Dorsolateral prefrontal cortex (tissue), 120 donors: ENCODE measurements at regions of chr16 and their contacts with region 1.

Region 1: DNA sequence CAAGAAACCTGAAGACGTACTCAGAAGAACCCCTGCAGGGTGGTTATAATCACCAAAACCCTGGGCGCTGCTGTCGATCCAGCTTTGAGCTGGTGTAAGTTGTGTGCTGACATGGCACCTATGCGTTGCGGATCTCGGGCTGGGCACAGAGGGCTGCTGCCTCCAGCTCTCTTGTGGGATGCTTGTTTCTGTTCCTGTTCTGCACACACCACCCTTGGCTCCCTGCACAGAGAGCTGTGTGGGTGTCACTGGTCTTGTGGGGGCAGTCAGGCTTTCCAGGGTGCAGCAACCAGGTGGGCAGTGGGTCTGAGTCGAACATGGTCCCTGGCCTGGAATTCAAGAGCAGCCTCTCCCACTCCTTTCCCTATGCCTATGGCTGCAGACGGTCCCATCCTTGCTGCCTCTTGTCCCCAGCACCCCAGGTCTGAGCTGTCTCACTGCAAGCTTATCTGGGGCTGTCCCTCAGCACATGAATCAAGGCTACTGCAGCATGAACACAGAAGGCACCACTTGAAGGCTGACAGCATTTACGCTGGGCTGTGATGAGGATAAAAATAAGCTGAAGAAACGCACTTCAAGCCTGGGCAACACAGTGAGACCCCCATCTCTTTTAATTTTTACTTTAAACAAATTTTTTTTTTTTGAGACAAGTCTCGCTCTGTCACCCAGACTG is 20.1 kb downstream of the ZNF276 start:
- DNase-seq: no peak
- H3K4me3 ChIP-seq: no peak overlapping the region
- H3K27ac ChIP-seq: peak overlapping the region in 34 of 59 donors; percentile 4 to 87 (median 54)
- H3K27me3 ChIP-seq: no peaks in the 10 kb centered on the region
- CTCF ChIP-seq: no peak

Region 2: GRCh38 chr16:89670496-89671431 is 70.7 kb before region 1 on chr16:
- intact Hi-C with region 1: no loop called
- DNase-seq: no peak
- H3K4me3 ChIP-seq: no peak overlapping the region
- H3K27ac ChIP-seq: no peak overlapping the region
- H3K27me3 ChIP-seq: no peaks in the 10 kb centered on the region
- CTCF ChIP-seq: no peak

Region 3: GRCh38 chr16:89708441-89708931 is 33.0 kb before region 1 on chr16:
- intact Hi-C with region 1: loop called in 1 of 2 experiments (anchors 5 kb)
- DNase-seq: no peak
- H3K4me3 ChIP-seq: no peak overlapping the region
- H3K27ac ChIP-seq: no peak overlapping the region
- H3K27me3 ChIP-seq: no peaks in the 10 kb centered on the region
- CTCF ChIP-seq: no peak

Region 4: GRCh38 chr16:89723279-89724250 is 17.9 kb before region 1 on chr16:
- intact Hi-C with region 1: loop called in 1 of 2 experiments (anchors 2 kb)
- DNase-seq: peak; percentile 46 to 98 (median 96)
- H3K4me3 ChIP-seq: peak overlapping the region; percentile 7 to 97 (median 85)
- H3K27ac ChIP-seq: peak overlapping the region; percentile 83 to 99 (median 97)
- H3K27me3 ChIP-seq: no peaks in the 10 kb centered on the region
- CTCF ChIP-seq: peak in 9 of 56 donors; percentile 7 to 34 (median 22)